CD8-positive, alpha-beta T cell (primary cell): ENCODE measurements at regions of chr12 and their contacts with region 1.

Region 1: DNA sequence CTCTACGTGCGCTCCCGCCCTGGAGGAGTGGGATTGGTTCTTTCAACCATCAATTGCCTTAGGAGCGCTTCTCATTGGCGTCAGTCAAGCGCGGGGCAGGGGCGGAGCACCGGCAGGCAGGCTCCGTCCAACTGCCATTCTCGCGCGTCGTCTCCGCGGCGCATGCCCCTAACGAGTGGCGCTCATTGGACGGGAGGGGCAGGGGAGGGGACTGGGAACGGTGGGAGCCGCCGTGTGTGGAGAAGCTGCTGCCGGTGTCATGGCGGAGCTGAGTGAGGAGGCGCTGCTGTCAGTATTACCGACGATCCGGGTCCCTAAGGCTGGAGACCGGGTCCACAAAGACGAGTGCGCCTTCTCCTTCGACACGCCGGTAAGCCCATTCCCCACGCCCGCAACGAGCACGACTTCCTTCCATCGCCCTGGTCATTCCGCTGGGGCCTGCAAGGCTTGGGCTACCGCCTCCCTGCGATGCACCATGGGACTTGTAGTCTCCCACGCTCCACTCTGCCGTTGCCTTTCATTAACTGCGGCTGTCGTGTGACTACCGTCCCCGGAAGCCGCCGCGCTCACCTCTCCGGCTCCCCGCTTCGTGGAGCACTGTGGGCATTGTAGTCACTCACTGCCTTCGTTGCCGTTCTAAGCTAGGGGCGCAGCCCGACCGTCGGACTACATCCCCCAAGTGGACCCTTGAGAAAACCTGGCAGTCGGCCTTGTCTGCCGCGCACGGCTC is at the start of gene USP5:
- DNase-seq: peak; percentile 94 to 100 (median 98)
- ATAC-seq: peak; percentile 75
- H3K4me3 ChIP-seq: peak within 1 kb of the TSS; percentile 88 to 89
- H3K4me3 Mint-ChIP-seq: peak within 1 kb of the TSS; percentile 95
- H3K27ac ChIP-seq: peak within 1 kb of the TSS; percentile 78 to 91
- H3K27ac Mint-ChIP-seq: peak within 1 kb of the TSS; percentile 99
- H3K4me1 ChIP-seq: peaks cover 20% of the 10 kb centered on the region
- H3K4me1 Mint-ChIP-seq: peaks cover 22% of the 10 kb centered on the region
- H3K27me3 ChIP-seq: no peaks in the 10 kb centered on the region
- H3K27me3 Mint-ChIP-seq: no peaks in the 10 kb centered on the region
- CTCF ChIP-seq: no peak
- total RNA-seq, gene USP5: 24.0 to 25.9 TPM

Region 2: DNA sequence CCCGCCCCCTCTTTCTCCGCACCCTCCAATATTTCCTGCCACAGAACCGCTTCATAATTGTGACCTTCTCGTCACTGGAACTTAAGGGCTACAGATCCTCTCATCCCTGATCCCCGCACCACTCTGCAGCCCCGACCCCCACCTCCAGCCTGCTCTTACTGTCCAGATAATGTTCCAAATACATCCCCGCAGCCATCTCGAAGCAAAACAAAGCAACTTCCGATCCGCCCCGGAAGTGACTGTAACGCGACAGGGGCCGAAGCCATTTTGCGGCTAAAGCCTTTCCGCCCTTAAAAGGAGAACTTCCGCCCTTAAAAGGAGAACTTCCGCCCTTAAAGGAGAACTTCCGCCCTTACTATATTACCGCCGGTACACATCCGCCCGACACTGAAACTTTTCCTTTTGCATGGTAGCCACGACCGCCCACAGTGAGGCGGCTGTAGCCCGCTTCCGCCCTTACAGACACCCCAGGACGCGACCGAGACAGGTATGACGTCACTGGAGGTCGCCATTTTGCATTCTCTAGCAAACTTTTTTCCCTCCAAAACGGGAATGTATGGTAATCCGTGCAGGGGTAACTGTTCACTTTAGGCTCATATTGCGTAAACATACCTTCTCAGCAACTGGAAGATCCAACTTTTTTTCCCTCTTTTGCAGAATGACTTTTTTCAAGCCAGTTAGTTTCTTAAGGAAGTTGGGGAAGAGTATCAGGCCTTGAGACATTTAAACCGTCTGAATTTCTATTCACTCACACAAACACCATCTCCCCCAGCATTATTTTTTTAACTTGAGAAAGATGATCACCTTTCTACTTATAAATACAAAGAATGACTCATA is 189.0 kb before region 1 on chr12 and contains the start of gene ING4:
- CTCF ChIA-PET with region 1: no interaction called
- POLR2A ChIA-PET with region 1: no interaction called
- intact Hi-C with region 1: loop called in 1 of 2 experiments (anchors 1 kb)
- DNase-seq: peak; percentile 91 to 100 (median 95)
- ATAC-seq: peak; percentile 97
- H3K4me3 ChIP-seq: peak within 1 kb of the TSS; percentile 81 to 92
- H3K4me3 Mint-ChIP-seq: peak within 1 kb of the TSS; percentile 96
- H3K27ac ChIP-seq: peak within 1 kb of the TSS; percentile 87 to 91
- H3K27ac Mint-ChIP-seq: peak within 1 kb of the TSS; percentile 97
- H3K4me1 ChIP-seq: peaks cover 20% of the 10 kb centered on the region
- H3K4me1 Mint-ChIP-seq: peaks cover 38% of the 10 kb centered on the region
- H3K27me3 ChIP-seq: no peaks in the 10 kb centered on the region
- H3K27me3 Mint-ChIP-seq: no peaks in the 10 kb centered on the region
- CTCF ChIP-seq: no peak
- total RNA-seq, gene ING4: 14.1 to 15.9 TPM

Region 3: DNA sequence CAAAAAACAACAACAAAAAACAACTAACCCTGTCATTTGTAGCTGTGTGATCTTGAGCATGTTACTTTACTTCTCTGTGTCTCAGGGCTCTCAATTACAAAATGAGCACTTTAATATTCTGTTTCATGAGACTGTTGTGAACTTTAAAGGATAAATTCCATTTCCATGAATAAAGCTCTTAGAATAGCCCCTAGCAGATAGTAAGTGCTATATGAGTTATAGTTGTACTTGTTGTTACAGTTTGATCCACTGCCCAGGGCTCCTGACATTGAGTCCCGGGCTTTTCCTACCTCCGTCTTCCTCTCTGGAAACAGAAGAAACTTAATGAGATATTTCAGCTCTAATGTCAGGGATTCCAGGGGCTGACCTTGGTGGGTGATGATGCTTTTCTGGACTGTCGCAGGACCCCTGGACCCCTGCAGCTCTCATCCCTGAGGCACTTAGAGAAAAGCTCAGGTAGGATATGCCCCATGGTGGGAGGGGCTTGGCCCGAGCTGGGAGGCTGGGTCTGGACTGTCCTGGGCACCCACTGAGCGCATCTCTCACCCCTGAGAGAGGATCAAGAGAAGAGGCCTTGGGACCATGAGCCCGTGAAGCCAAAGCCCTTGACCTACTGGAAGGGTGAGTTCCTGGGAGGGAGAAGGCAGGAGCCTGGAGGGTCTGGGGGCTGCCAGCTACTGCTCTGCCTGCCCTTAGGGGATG is 18.7 kb before region 1 on chr12:
- CTCF ChIA-PET with region 1: interaction called, 12 read pairs
- POLR2A ChIA-PET with region 1: interaction called, 5 read pairs
- intact Hi-C with region 1: loop called in 1 of 2 experiments (anchors 2 kb)
- DNase-seq: no peak
- ATAC-seq: no peak
- H3K4me3 ChIP-seq: no peak overlapping the region
- H3K4me3 Mint-ChIP-seq: no peak overlapping the region
- H3K27ac ChIP-seq: no peak overlapping the region
- H3K27ac Mint-ChIP-seq: no peak overlapping the region
- H3K4me1 ChIP-seq: peaks cover 13% of the 10 kb centered on the region
- H3K4me1 Mint-ChIP-seq: peaks cover 13% of the 10 kb centered on the region
- H3K27me3 ChIP-seq: peaks cover 0 to 11% of the 10 kb centered on the region in 2 experiments
- H3K27me3 Mint-ChIP-seq: peaks cover 2% of the 10 kb centered on the region
- CTCF ChIP-seq: no peak

Region 4: GRCh38 chr12:6904280-6905278 is 52.5 kb after region 1 on chr12 and contains the start of gene LRRC23:
- CTCF ChIA-PET with region 1: no interaction called
- POLR2A ChIA-PET with region 1: interaction called, 4 read pairs
- intact Hi-C with region 1: loop called in 1 of 2 experiments (anchors 1 kb)
- DNase-seq: peak; percentile 92 to 99 (median 97)
- ATAC-seq: peak; percentile 96
- H3K4me3 ChIP-seq: peak within 1 kb of the TSS; percentile 56 to 64
- H3K4me3 Mint-ChIP-seq: peak within 1 kb of the TSS; percentile 5
- H3K27ac ChIP-seq: peak within 1 kb of the TSS; percentile 86 to 88
- H3K27ac Mint-ChIP-seq: no peak within 1 kb of the TSS
- H3K4me1 ChIP-seq: peaks cover 15% of the 10 kb centered on the region
- H3K4me1 Mint-ChIP-seq: no peaks in the 10 kb centered on the region
- H3K27me3 ChIP-seq: no peaks in the 10 kb centered on the region
- H3K27me3 Mint-ChIP-seq: no peaks in the 10 kb centered on the region
- CTCF ChIP-seq: no peak
- total RNA-seq, gene LRRC23: 6.5 to 7.2 TPM

Region 5: GRCh38 chr12:6965026-6965661 is 113.1 kb after region 1 on chr12:
- CTCF ChIA-PET with region 1: no interaction called
- POLR2A ChIA-PET with region 1: interaction called, 3 read pairs
- intact Hi-C with region 1: loop called (anchors 1 kb)
- DNase-seq: peak; percentile 74 to 93 (median 88)
- ATAC-seq: peak; percentile 45
- H3K4me3 ChIP-seq: no peak overlapping the region
- H3K4me3 Mint-ChIP-seq: no peak overlapping the region
- H3K27ac ChIP-seq: peak overlapping the region; percentile 20 to 74
- H3K27ac Mint-ChIP-seq: peak overlapping the region; percentile 83
- H3K4me1 ChIP-seq: peaks cover 56% of the 10 kb centered on the region
- H3K4me1 Mint-ChIP-seq: peaks cover 54% of the 10 kb centered on the region
- H3K27me3 ChIP-seq: no peaks in the 10 kb centered on the region
- H3K27me3 Mint-ChIP-seq: no peaks in the 10 kb centered on the region
- CTCF ChIP-seq: peak; percentile 78